ENCODE measurements at regions of chr1 and their contacts with region 1.

Region 1: GRCh38 chr1:158013840-158014730 is 20.6 kb downstream of the KIRREL1 start:
- DNase-seq: no peak
- H3K4me3 ChIP-seq: peak overlapping the region in 1 of 4 experiments; percentile 11; a peak in 3 of 8 replicates
- H3K27ac ChIP-seq: no peak overlapping the region
- H3K4me1 ChIP-seq: peaks cover 13 to 44% (median 35%) of the 10 kb centered on the region in 4 experiments
- H3K27me3 ChIP-seq: no peaks in the 10 kb centered on the region
- CTCF ChIP-seq: no peak
- EP300 ChIP-seq: no peak
- POLR2A ChIP-seq: no peak
- RAD21 ChIP-seq: no peak

Region 2: DNA sequence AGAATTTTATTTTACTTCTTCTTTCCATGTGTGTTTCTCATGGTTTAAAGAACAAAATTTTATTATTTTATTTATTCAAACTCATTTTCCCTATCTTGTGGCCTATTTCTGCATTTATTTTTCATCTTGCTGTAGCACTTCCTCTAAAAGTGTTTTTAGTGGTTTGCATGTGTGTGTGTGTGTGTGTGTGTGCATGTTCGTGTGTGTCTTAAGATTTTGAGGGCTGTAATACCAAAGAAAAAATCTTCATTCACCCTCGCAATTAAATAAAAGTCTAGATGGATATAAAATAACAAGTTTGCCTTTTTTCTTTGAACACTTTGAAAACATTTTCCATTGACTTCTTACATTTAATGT is 288.9 kb before region 1 on chr1:
- CTCF ChIA-PET with region 1: no interaction called
- POLR2A ChIA-PET with region 1: no interaction called
- DNase-seq: no peak
- H3K4me3 ChIP-seq: no peak overlapping the region
- H3K27ac ChIP-seq: no peak overlapping the region
- H3K4me1 ChIP-seq: no peaks in the 10 kb centered on the region
- H3K27me3 ChIP-seq: no peaks in the 10 kb centered on the region
- CTCF ChIP-seq: no peak
- EP300 ChIP-seq: no peak
- POLR2A ChIP-seq: no peak
- RAD21 ChIP-seq: no peak

Region 3: DNA sequence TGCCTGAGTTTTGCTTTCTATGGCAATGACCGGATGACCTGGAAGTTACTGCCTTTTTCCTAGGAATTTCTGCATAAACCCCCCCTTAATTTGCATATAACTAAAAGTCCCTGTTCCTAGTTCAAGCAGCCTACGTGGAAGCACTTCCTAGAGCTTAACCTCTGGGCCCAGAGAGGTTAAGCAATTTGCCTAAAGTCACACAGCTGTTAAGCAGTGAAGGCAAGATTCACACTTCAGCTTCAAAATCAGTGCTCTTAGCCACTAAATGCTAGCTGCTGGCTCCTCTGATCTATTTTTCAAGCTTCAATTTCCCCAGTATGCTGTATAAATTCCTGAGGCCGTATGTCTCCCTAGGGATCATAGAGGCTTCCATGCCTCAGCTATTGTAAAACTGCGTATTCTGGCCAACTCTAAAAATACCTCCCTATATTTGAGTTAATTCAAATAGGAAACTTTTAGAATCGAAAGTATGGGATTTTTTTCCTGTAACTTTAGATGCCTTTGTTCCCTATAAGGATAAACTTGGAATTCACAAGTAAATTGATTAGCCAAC is 119.4 kb before region 1 on chr1:
- CTCF ChIA-PET with region 1: no interaction called
- POLR2A ChIA-PET with region 1: no interaction called
- DNase-seq: no peak
- H3K4me3 ChIP-seq: no peak overlapping the region
- H3K27ac ChIP-seq: no peak overlapping the region
- H3K4me1 ChIP-seq: no peaks in the 10 kb centered on the region
- H3K27me3 ChIP-seq: no peaks in the 10 kb centered on the region
- CTCF ChIP-seq: no peak
- EP300 ChIP-seq: no peak
- POLR2A ChIP-seq: no peak
- RAD21 ChIP-seq: no peak

Region 4: GRCh38 chr1:157969697-157970485 is 44.2 kb before region 1 on chr1:
- CTCF ChIA-PET with region 1: interaction called, 1,615 read pairs
- POLR2A ChIA-PET with region 1: interaction called, 4 read pairs
- DNase-seq: peak in 1 of 2 experiments; percentile 72
- H3K4me3 ChIP-seq: no peak overlapping the region
- H3K27ac ChIP-seq: no peak overlapping the region
- H3K4me1 ChIP-seq: peaks cover 0 to 8% (median 0%) of the 10 kb centered on the region in 4 experiments; a peak in 1 of 7 replicates
- H3K27me3 ChIP-seq: no peaks in the 10 kb centered on the region
- CTCF ChIP-seq: peak; percentile 31 to 96 (median 89)
- EP300 ChIP-seq: no peak
- POLR2A ChIP-seq: no peak
- RAD21 ChIP-seq: peak; percentile 87 to 90

Region 5: GRCh38 chr1:158059984-158060383 is 45.9 kb after region 1 on chr1:
- CTCF ChIA-PET with region 1: no interaction called
- POLR2A ChIA-PET with region 1: no interaction called
- DNase-seq: peak in 1 of 2 experiments; percentile 23
- H3K4me3 ChIP-seq: no peak overlapping the region
- H3K27ac ChIP-seq: no peak overlapping the region
- H3K4me1 ChIP-seq: peaks cover 4 to 24% (median 12%) of the 10 kb centered on the region in 4 experiments
- H3K27me3 ChIP-seq: no peaks in the 10 kb centered on the region
- CTCF ChIP-seq: no peak
- EP300 ChIP-seq: no peak
- POLR2A ChIP-seq: no peak
- RAD21 ChIP-seq: no peak

Region 6: DNA sequence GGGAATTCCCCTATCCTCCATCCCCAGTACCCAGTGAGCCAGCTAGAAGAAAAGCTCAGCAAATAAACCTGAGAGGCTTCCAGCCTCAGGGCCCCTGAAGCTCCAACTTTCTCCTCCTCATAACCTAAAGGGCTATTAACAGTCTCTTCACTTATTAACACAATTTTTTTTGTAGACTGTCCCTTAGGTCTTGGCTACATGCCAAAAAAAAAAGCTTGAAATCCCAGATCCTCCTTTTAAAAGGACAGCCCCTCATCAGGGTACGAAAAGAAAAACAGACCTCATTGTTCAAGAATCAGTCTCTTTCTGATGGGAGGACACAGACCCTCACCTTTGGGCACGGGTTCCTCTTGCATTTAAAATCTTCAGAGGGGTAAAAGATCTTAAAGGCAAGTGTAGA is 93.8 kb after region 1 on chr1:
- CTCF ChIA-PET with region 1: no interaction called
- POLR2A ChIA-PET with region 1: no interaction called
- DNase-seq: no peak
- H3K4me3 ChIP-seq: no peak overlapping the region
- H3K27ac ChIP-seq: no peak overlapping the region
- H3K4me1 ChIP-seq: peaks cover 6 to 22% (median 21%) of the 10 kb centered on the region in 4 experiments
- H3K27me3 ChIP-seq: peaks cover 0 to 11% (median 7%) of the 10 kb centered on the region in 4 experiments; a peak in 6 of 7 replicates
- CTCF ChIP-seq: no peak
- EP300 ChIP-seq: no peak
- POLR2A ChIP-seq: no peak
- RAD21 ChIP-seq: no peak

Measured in H1 (cell line).